K562 (cell line): ENCODE measurements at regions of chr17 and their contacts with region 1.

Region 1: GRCh38 chr17:57243171-57243948 is 13.0 kb upstream of the MSI2 start:
- DNase-seq: peak; percentile 78 to 83 (median 80)
- ATAC-seq: peak; percentile 92
- H3K4me3 ChIP-seq: no peak overlapping the region
- H3K27ac ChIP-seq: no peak overlapping the region
- H3K4me1 ChIP-seq: peaks cover 0 to 3% of the 10 kb centered on the region in 2 experiments; a peak in 1 of 5 replicates
- H3K27me3 ChIP-seq: peaks cover 0 to 6% of the 10 kb centered on the region in 2 experiments; a peak in 1 of 5 replicates
- CTCF ChIP-seq: peak; percentile 100
- EP300 ChIP-seq: 0 out of 2 replicates have a peak, but pooled peaks have one; percentile 27
- POLR2A ChIP-seq: no peak
- RAD21 ChIP-seq: peak; percentile 97 to 98

Region 2: DNA sequence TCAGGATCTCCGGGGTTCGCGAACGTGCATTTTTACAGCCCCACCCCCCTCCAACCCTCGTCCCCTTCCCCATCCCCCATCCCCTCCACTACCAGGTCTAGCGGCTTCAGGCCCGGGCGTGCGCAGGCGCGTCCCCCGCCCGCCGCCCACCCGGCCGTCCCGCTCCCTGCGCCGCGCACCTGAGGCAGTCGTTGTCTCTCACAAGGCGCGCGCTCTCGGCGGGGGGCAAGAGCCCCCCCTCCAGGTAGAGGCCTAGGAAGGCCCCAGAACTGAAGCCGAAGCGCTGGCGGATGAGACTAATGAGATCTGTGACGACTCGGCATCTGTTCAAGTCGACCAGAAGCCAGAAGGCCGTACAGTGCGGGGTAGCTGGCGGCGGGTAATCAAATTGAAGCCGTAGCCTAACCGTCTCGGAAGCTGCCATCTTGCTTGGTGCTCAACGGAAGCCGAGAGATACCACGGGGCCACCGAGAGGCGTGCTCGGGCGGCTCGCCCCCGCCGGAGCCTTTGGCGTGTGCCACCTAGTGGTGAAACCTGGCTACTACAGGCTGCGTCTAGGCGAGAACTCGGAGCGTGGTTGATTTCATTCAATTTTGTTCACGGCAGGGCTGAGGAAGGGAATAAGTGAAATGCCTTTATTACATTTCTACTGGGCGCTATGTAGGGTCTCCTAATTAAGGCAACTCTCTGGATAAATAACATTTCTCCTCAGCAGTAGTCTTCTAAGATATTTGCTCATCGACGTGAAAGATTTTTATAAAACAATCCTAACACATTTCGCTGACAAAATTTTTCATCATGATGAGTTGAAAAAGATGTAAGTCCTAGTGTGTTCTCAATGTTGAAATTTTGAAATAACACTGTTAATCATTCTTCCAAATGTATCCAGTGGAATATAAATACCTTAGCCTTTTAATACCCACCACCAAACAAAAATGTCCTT is 282.5 kb before region 1 on chr17 and contains the start of gene COIL:
- CTCF ChIA-PET with region 1: no interaction called
- POLR2A ChIA-PET with region 1: no interaction called
- in situ Hi-C with region 1: no loop called
- intact Hi-C with region 1: no loop called
- DNase-seq: peak; percentile 91 to 96 (median 94)
- ATAC-seq: peak; percentile 96
- H3K4me3 ChIP-seq: peak within 1 kb of the TSS; percentile 70
- H3K27ac ChIP-seq: peak within 1 kb of the TSS; percentile 92
- H3K4me1 ChIP-seq: peaks cover 8 to 10% of the 10 kb centered on the region in 2 experiments; a peak in 4 of 5 replicates
- H3K27me3 ChIP-seq: no peaks in the 10 kb centered on the region
- CTCF ChIP-seq: peak; percentile 95 to 99 (median 96)
- EP300 ChIP-seq: no peak; the same call in 1 of the 2 replicates
- POLR2A ChIP-seq: peak; percentile 93
- RAD21 ChIP-seq: peak; percentile 71 to 78
- polyA plus RNA-seq, gene COIL: 23.9 to 30.8 TPM

Region 3: GRCh38 chr17:57130761-57131461 is 112.4 kb before region 1 on chr17:
- CTCF ChIA-PET with region 1: interaction called, 3 read pairs
- POLR2A ChIA-PET with region 1: no interaction called
- in situ Hi-C with region 1: no loop called
- intact Hi-C with region 1: loop called (anchors 5 kb)
- DNase-seq: peak; percentile 88 to 91 (median 90)
- ATAC-seq: peak; percentile 98
- H3K4me3 ChIP-seq: no peak overlapping the region
- H3K27ac ChIP-seq: no peak overlapping the region
- H3K4me1 ChIP-seq: peaks cover 0 to 4% of the 10 kb centered on the region in 2 experiments; a peak in 1 of 5 replicates
- H3K27me3 ChIP-seq: peaks cover 18 to 20% of the 10 kb centered on the region in 2 experiments
- CTCF ChIP-seq: peak; percentile 63 to 85 (median 81)
- EP300 ChIP-seq: no peak
- POLR2A ChIP-seq: no peak
- RAD21 ChIP-seq: peak; percentile 60 to 77

Region 4: DNA sequence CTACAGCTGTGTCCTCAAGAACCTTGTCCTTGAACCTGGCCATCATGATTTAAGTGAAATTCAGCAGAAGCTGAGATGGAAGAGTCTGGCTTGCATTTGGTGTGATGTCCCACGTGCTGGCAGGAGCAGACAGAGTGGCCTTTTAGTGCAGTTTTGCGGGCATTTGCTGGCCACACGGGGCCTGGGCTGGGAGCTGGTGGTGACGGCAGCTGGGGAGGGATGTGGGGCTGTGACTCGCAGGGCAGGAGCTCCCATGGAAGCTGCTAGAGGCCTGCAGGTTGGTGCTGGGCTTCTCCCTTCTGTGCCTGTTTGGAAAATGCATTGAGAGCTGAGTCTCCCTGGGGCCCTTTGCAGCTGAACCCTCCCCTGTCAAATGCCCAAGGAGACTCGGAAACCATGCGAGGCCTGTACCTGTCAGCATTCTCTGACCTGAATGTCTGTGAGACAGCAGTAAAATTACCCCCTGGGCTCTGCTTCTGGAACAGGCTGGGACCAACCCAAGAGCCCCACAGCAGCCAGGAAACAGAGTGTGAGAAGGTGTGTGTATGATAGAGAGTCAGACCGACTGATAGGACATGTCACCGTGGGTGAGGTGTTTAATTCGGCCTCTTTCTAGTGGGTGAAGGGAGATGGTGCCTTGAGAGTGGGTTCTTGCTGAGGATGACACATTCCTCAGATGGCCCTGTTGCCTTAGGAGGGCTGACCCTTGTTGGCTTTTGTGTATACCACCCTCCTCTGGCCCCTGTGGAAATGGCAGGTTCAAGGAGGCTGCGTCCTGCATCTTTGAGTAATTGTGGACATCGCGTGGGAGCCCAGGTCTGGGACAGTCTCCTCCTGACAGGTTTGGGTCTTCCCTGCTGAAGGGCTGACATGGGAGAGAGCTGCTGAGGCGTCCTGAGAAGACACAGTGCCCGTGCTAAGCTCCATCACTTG is 158.5 kb after region 1 on chr17:
- CTCF ChIA-PET with region 1: interaction called, 7 read pairs
- POLR2A ChIA-PET with region 1: no interaction called
- in situ Hi-C with region 1: no loop called
- intact Hi-C with region 1: loop called (anchors 1 kb)
- DNase-seq: peak in 2 of 4 experiments; percentile 50 to 56
- ATAC-seq: peak; percentile 84
- H3K4me3 ChIP-seq: no peak overlapping the region
- H3K27ac ChIP-seq: no peak overlapping the region
- H3K4me1 ChIP-seq: peaks cover 11 to 14% of the 10 kb centered on the region in 2 experiments
- H3K27me3 ChIP-seq: no peaks in the 10 kb centered on the region
- CTCF ChIP-seq: peak; percentile 57 to 66 (median 63)
- EP300 ChIP-seq: no peak
- POLR2A ChIP-seq: no peak
- RAD21 ChIP-seq: peak; percentile 41 to 82

Region 5: DNA sequence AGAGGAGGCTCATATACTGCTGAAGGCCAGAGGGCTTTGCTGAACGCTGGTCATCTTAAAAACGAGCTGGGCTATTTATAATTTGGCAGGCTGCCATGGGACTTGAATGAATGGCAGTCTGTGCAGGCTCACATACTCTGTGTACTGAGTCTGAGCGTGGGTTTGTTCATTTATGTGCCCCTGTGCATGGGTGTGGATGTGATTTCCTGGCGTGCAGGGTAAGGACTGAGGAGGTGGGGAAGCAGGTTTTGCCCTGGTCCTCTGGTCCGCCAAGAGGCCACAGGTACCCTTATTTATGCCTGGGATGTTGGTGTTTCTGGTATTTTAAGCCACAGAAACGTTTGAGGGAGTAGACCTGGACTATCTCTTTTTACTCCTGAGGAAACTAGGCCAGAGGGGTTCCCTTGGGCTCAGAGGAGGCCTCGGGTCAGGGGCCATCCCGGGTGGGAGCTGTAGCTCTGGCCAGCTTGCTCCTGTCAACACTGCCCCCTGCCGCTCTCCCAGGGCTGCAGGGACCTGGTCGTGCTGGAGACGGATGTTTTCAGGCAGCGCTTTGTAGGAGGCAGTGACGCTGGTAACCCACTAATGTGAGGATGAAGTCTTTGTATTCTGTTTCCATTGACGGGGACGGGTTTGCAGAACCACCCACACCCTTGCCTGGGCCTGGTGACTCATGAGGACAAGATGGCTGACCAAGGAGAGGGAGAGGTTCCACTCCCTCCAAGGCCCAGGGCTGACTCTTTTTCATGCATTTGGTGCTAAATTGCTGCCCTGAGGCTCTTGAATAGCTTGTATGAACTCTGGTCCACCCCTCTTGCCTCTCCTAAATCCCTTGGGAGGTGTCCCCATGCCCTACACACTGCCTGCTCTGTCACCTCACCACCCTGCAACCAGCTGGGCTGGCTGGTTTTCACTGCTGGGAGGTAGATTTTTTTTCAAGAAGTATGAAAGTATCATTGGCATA is 197.4 kb after region 1 on chr17:
- CTCF ChIA-PET with region 1: interaction called, 13 read pairs
- POLR2A ChIA-PET with region 1: interaction called, 5 read pairs
- in situ Hi-C with region 1: no loop called
- intact Hi-C with region 1: loop called (anchors 1 kb)
- DNase-seq: peak; percentile 59 to 77 (median 70)
- ATAC-seq: peak; percentile 93
- H3K4me3 ChIP-seq: no peak overlapping the region
- H3K27ac ChIP-seq: peak overlapping the region; percentile 43; the same call in 1 of the 3 replicates
- H3K4me1 ChIP-seq: peaks cover 15 to 20% of the 10 kb centered on the region in 2 experiments
- H3K27me3 ChIP-seq: no peaks in the 10 kb centered on the region
- CTCF ChIP-seq: peak; percentile 66 to 75 (median 72)
- EP300 ChIP-seq: no peak
- POLR2A ChIP-seq: no peak
- RAD21 ChIP-seq: peak; percentile 57 to 76

Region 6: DNA sequence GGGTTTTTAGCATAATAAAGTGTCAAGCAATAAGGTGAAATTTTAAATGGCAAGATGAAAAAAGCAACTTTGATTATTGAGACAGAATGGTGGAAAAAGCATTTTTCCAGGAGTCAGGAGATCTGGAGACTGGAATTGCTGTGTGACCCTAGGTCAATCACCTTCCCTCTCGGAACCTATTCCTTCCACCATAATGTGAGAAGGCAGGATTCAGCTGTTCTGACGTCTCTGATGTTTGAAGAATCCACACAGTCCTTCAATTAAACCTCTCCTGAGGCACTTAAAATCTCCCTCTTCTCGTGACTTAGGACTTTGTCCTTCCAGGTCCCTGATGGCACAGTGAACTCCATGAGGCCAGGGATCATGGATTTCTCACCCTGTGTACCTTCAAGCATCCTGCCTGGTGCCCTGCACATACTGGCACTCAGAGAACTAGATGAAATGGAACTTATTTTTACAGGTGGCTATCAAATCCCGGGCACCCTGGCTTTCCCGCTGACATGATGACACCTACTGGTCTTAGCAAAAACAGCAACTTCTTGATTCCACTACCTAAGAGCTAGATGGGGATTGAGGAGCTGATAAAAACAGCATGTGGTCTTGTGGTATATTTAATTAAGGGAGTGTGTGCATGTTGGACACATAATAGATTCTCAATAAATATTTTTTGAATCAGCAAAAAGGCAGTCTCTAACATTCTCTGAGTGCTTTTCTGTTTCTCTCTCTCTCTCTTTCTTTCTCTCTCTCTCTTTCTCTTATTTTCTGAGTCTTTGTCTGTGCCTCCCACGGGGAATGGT is 504.1 kb after region 1 on chr17:
- CTCF ChIA-PET with region 1: interaction called, 7 read pairs
- POLR2A ChIA-PET with region 1: no interaction called
- in situ Hi-C with region 1: no loop called
- intact Hi-C with region 1: loop called (anchors 10 kb)
- DNase-seq: peak; percentile 53 to 64 (median 60)
- ATAC-seq: peak; percentile 85
- H3K4me3 ChIP-seq: no peak overlapping the region
- H3K27ac ChIP-seq: no peak overlapping the region
- H3K4me1 ChIP-seq: no peaks in the 10 kb centered on the region
- H3K27me3 ChIP-seq: peaks cover 38 to 55% of the 10 kb centered on the region in 2 experiments
- CTCF ChIP-seq: peak; percentile 71 to 85 (median 77)
- EP300 ChIP-seq: no peak
- POLR2A ChIP-seq: no peak
- RAD21 ChIP-seq: peak; percentile 70 to 82